ENCODE measurements at regions of chr12 and their contacts with region 1.

Region 1: GRCh38 chr12:101939856-101940265 is 62.5 kb downstream of the DRAM1 start:
- DNase-seq: peak; percentile 64
- H3K4me3 ChIP-seq: no peak overlapping the region
- H3K27ac ChIP-seq: peak overlapping the region; percentile 53 to 55
- H3K4me1 ChIP-seq: peaks cover 3% of the 10 kb centered on the region
- H3K27me3 ChIP-seq: no peaks in the 10 kb centered on the region
- CTCF ChIP-seq: peak in 3 of 4 experiments; percentile 66 to 79 (median 77)
- POLR2A ChIP-seq: no peak

Region 2: GRCh38 chr12:101902641-101903040 is 37.2 kb before region 1 on chr12:
- intact Hi-C with region 1: no loop called
- DNase-seq: no peak
- H3K4me3 ChIP-seq: no peak overlapping the region
- H3K27ac ChIP-seq: no peak overlapping the region
- H3K4me1 ChIP-seq: no peaks in the 10 kb centered on the region
- H3K27me3 ChIP-seq: no peaks in the 10 kb centered on the region
- CTCF ChIP-seq: no peak
- POLR2A ChIP-seq: no peak

Region 3: GRCh38 chr12:102061560-102062418 is 121.9 kb after region 1 on chr12 and contains the start of gene WASHC3:
- intact Hi-C with region 1: loop called (anchors 5 kb)
- DNase-seq: peak; percentile 94
- H3K4me3 ChIP-seq: peak within 1 kb of the TSS; percentile 67 to 92
- H3K27ac ChIP-seq: peak within 1 kb of the TSS; percentile 93 to 97
- H3K4me1 ChIP-seq: no peaks in the 10 kb centered on the region
- H3K27me3 ChIP-seq: no peaks in the 10 kb centered on the region
- CTCF ChIP-seq: peak in 1 of 4 experiments; percentile 22
- POLR2A ChIP-seq: peak; percentile 73
- total RNA-seq, gene WASHC3: 60.9 to 110 TPM

Region 4: GRCh38 chr12:102484428-102484958 is 544.6 kb after region 1 on chr12:
- intact Hi-C with region 1: loop called (anchors 5 kb)
- DNase-seq: peak; percentile 14
- H3K4me3 ChIP-seq: no peak overlapping the region
- H3K27ac ChIP-seq: no peak overlapping the region
- H3K4me1 ChIP-seq: no peaks in the 10 kb centered on the region
- H3K27me3 ChIP-seq: no peaks in the 10 kb centered on the region
- CTCF ChIP-seq: peak; percentile 61 to 84 (median 66)
- POLR2A ChIP-seq: no peak

Region 5: GRCh38 chr12:102769319-102769916 is 829.6 kb after region 1 on chr12:
- intact Hi-C with region 1: loop called (anchors 5 kb)
- DNase-seq: peak; percentile 25
- H3K4me3 ChIP-seq: no peak overlapping the region
- H3K27ac ChIP-seq: no peak overlapping the region
- H3K4me1 ChIP-seq: no peaks in the 10 kb centered on the region
- H3K27me3 ChIP-seq: no peaks in the 10 kb centered on the region
- CTCF ChIP-seq: peak in 3 of 4 experiments; percentile 27 to 55 (median 50)
- POLR2A ChIP-seq: no peak